ENCODE measurements at regions of chr20 and their contacts with region 1.

Region 1: GRCh38 chr20:35981969-35982368 is 13.6 kb downstream of the CNBD2 start:
- DNase-seq: no peak
- ATAC-seq: no peak
- H3K4me3 ChIP-seq: no peak overlapping the region
- H3K27ac ChIP-seq: no peak overlapping the region
- H3K4me1 ChIP-seq: no peaks in the 10 kb centered on the region
- H3K27me3 ChIP-seq: no peaks in the 10 kb centered on the region
- CTCF ChIP-seq: no peak
- POLR2A ChIP-seq: no peak

Region 2: GRCh38 chr20:36144336-36144735 is 162.4 kb after region 1 on chr20:
- intact Hi-C with region 1: loop called (anchors 5 kb)
- DNase-seq: no peak
- ATAC-seq: no peak
- H3K4me3 ChIP-seq: no peak overlapping the region
- H3K27ac ChIP-seq: no peak overlapping the region
- H3K4me1 ChIP-seq: peaks cover 3% of the 10 kb centered on the region
- H3K27me3 ChIP-seq: no peaks in the 10 kb centered on the region
- CTCF ChIP-seq: no peak
- POLR2A ChIP-seq: no peak

Region 3: GRCh38 chr20:36235892-36236785 is 254.2 kb after region 1 on chr20 and contains the start of gene AAR2:
- intact Hi-C with region 1: no loop called
- DNase-seq: peak; percentile 81 to 82 (median 82)
- ATAC-seq: peak; percentile 94
- H3K4me3 ChIP-seq: peak within 1 kb of the TSS; percentile 44 to 93
- H3K27ac ChIP-seq: peak within 1 kb of the TSS; percentile 47 to 78 (median 61)
- H3K4me1 ChIP-seq: peaks cover 27% of the 10 kb centered on the region
- H3K27me3 ChIP-seq: no peaks in the 10 kb centered on the region
- CTCF ChIP-seq: no peak
- POLR2A ChIP-seq: peak; percentile 6 to 78 (median 65)
- total RNA-seq, gene AAR2: 16.3 to 19.4 TPM